ENCODE measurements at regions of chr13 and their contacts with region 1.

Region 1: GRCh38 chr13:49792550-49793324 is at the start of gene KPNA3:
- DNase-seq: peak; percentile 96
- H3K4me3 Mint-ChIP-seq: peak within 1 kb of the TSS; percentile 88
- H3K27ac Mint-ChIP-seq: peak within 1 kb of the TSS; percentile 90
- H3K4me1 Mint-ChIP-seq: peaks cover 20% of the 10 kb centered on the region
- H3K27me3 Mint-ChIP-seq: no peaks in the 10 kb centered on the region
- CTCF ChIP-seq: no peak
- total RNA-seq, gene KPNA3: 40.6 and 41.3 TPM in 2 replicates

Region 2: GRCh38 chr13:49319551-49319950 is 473.2 kb before region 1 on chr13:
- CTCF ChIA-PET with region 1: no interaction called
- POLR2A ChIA-PET with region 1: no interaction called
- intact Hi-C with region 1: no loop called
- DNase-seq: no peak
- H3K4me3 Mint-ChIP-seq: no peak overlapping the region
- H3K27ac Mint-ChIP-seq: no peak overlapping the region
- H3K4me1 Mint-ChIP-seq: no peaks in the 10 kb centered on the region
- H3K27me3 Mint-ChIP-seq: no peaks in the 10 kb centered on the region
- CTCF ChIP-seq: no peak

Region 3: DNA sequence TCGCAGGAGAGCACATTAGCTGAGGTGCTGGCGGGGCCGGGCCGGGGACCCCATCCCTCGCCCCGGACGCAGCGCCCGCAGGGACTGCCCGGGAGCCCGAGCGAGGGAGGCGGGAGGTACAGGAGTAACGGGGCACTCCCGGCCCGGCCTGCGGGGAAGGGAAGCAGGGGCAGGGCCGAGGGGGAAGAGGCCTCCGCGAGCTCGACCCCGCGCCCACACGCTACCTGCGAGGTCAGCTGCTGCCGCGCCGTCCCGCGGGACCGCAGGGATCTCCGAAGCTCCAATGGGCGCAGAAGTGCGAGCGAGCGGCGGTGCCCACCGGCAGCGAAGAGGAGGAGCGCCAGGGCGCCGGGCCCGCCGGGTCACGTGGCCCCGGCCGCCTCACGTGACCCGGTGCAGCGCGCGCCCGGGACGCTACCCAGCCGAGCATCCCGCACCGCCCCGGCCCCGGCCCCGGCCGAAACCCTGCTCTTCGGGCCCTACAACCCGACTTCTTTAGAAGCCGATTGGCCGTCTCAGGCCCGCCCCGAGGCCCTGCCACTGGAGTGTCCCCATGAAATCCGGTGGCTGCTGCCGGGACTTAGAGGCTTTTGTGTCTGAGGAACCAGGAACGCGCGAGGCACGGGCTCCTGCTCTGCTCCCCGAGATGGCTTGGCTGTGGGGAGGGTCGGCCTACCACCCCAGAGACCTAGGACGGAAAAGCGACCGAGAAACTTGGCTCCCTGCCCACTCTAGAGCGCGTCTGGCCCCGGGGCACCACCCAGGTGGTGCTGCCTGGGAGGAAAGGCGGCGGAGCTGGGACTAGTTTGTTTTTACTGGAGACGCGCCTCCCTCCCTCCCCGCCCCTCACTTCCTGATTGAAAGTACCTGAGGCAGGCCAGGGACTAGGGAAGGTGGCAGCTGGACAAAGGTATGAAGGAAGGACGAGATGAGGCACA is 207.2 kb before region 1 on chr13 and contains the start of gene RCBTB1:
- CTCF ChIA-PET with region 1: interaction called, 3 read pairs
- POLR2A ChIA-PET with region 1: interaction called, 17 read pairs
- intact Hi-C with region 1: no loop called
- DNase-seq: peak; percentile 70
- H3K4me3 Mint-ChIP-seq: peak within 1 kb of the TSS; percentile 77
- H3K27ac Mint-ChIP-seq: peak within 1 kb of the TSS; percentile 83
- H3K4me1 Mint-ChIP-seq: peaks cover 31% of the 10 kb centered on the region
- H3K27me3 Mint-ChIP-seq: no peaks in the 10 kb centered on the region
- CTCF ChIP-seq: no peak
- total RNA-seq, gene RCBTB1: 16.8 and 17.9 TPM in 2 replicates

Region 4: GRCh38 chr13:49690992-49691886 is 101.5 kb before region 1 on chr13 and contains the start of gene EBPL:
- CTCF ChIA-PET with region 1: interaction called, 4 read pairs
- POLR2A ChIA-PET with region 1: interaction called, 97 read pairs
- intact Hi-C with region 1: loop called (anchors 1 kb)
- DNase-seq: peak; percentile 97
- H3K4me3 Mint-ChIP-seq: peak within 1 kb of the TSS; percentile 94
- H3K27ac Mint-ChIP-seq: peak within 1 kb of the TSS; percentile 97
- H3K4me1 Mint-ChIP-seq: peaks cover 34% of the 10 kb centered on the region
- H3K27me3 Mint-ChIP-seq: no peaks in the 10 kb centered on the region
- CTCF ChIP-seq: no peak
- total RNA-seq, gene EBPL: 90.1 and 121 TPM in 2 replicates

Region 5: GRCh38 chr13:49772828-49773227 is 19.9 kb before region 1 on chr13:
- CTCF ChIA-PET with region 1: interaction called, 4 read pairs
- POLR2A ChIA-PET with region 1: interaction called, 13 read pairs
- intact Hi-C with region 1: no loop called
- DNase-seq: no peak
- H3K4me3 Mint-ChIP-seq: no peak overlapping the region
- H3K27ac Mint-ChIP-seq: no peak overlapping the region
- H3K4me1 Mint-ChIP-seq: peaks cover 8% of the 10 kb centered on the region
- H3K27me3 Mint-ChIP-seq: no peaks in the 10 kb centered on the region
- CTCF ChIP-seq: no peak

Region 6: GRCh38 chr13:49806126-49806536 is 13.4 kb after region 1 on chr13:
- CTCF ChIA-PET with region 1: interaction called, 4 read pairs
- POLR2A ChIA-PET with region 1: interaction called, 20 read pairs
- intact Hi-C with region 1: no loop called
- DNase-seq: peak; percentile 37
- H3K4me3 Mint-ChIP-seq: no peak overlapping the region
- H3K27ac Mint-ChIP-seq: no peak overlapping the region
- H3K4me1 Mint-ChIP-seq: no peaks in the 10 kb centered on the region
- H3K27me3 Mint-ChIP-seq: no peaks in the 10 kb centered on the region
- CTCF ChIP-seq: no peak

Region 7: GRCh38 chr13:49858183-49858856 is 65.6 kb after region 1 on chr13:
- CTCF ChIA-PET with region 1: interaction called, 4 read pairs
- POLR2A ChIA-PET with region 1: interaction called, 11 read pairs
- intact Hi-C with region 1: no loop called
- DNase-seq: peak; percentile 84
- H3K4me3 Mint-ChIP-seq: peak overlapping the region; percentile 50
- H3K27ac Mint-ChIP-seq: peak overlapping the region; percentile 91
- H3K4me1 Mint-ChIP-seq: peaks cover 19% of the 10 kb centered on the region
- H3K27me3 Mint-ChIP-seq: no peaks in the 10 kb centered on the region
- CTCF ChIP-seq: no peak

Region 8: GRCh38 chr13:50244713-50245574 is 452.2 kb after region 1 on chr13:
- CTCF ChIA-PET with region 1: no interaction called
- POLR2A ChIA-PET with region 1: no interaction called
- intact Hi-C with region 1: no loop called
- DNase-seq: peak; percentile 97
- H3K4me3 Mint-ChIP-seq: no peak overlapping the region
- H3K27ac Mint-ChIP-seq: peak overlapping the region; percentile 65
- H3K4me1 Mint-ChIP-seq: peaks cover 18% of the 10 kb centered on the region
- H3K27me3 Mint-ChIP-seq: no peaks in the 10 kb centered on the region
- CTCF ChIP-seq: no peak

Measured in MCF 10A (cell line).